ENCODE measurements at regions of chr9 and their contacts with region 1.

Region 1: DNA sequence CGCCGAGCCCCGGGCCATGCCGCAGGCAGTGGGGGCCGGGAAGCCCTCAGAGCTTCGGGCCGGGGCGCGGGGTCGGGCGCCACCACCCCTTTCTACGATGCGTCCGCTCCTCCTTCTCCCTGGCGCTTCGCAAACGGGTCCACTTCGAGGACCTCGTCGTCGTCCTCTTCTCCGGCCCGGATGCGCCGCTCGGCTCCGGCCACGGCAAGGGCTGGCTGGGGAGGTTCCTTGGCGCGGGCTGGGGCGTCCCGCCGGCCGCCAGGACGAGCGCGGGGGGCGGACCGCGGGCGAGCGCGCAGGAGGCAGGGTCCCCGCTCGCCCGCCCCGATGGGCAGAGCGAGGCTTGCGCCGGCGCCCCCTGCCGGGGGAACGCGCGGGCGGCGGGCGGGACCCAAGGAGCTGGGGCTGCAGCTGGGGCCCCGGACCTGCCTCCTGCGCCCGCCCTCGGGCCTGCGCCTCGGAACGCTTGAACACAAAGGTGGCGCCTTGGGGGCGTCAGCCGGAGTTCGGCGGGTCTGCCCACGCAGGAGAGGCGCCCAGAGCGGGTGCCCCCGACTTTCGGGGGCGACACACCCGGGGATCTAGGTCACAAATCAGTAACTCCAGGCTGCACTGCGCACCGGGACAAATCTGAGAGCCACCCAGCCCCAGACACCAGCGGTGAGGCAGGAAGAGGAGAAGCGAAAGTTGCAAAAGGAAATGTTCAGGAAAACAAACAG is at the start of gene ROR2:
- DNase-seq: peak in 4 of 9 donors; percentile 1 to 82 (median 18)
- ATAC-seq: peak; percentile 63
- H3K4me3 ChIP-seq: peak within 1 kb of the TSS; percentile 13
- H3K4me3 Mint-ChIP-seq: peak within 1 kb of the TSS in 9 of 10 donors; percentile 13 to 82 (median 49)
- H3K27ac ChIP-seq: no peak within 1 kb of the TSS
- H3K27ac Mint-ChIP-seq: no peak within 1 kb of the TSS
- H3K4me1 ChIP-seq: peaks cover 0 to 4% of the 10 kb centered on the region in 2 donors
- H3K4me1 Mint-ChIP-seq: peaks cover 0 to 11% (median 7%) of the 10 kb centered on the region in 7 donors
- H3K27me3 ChIP-seq: peaks cover 3 to 14% of the 10 kb centered on the region in 2 donors
- H3K27me3 Mint-ChIP-seq: peaks cover 63 to 78% (median 76%) of the 10 kb centered on the region in 5 donors
- total RNA-seq, gene ROR2: 0.48 to 2.1 TPM in 2 of 5 experiments, not detected in the others

Region 2: GRCh38 chr9:91775011-91775707 is 174.9 kb before region 1 on chr9:
- CTCF ChIA-PET with region 1: no interaction called
- POLR2A ChIA-PET with region 1: no interaction called
- intact Hi-C with region 1: loop called in 1 of 2 experiments (anchors 1 kb)
- DNase-seq: peak in 7 of 9 donors; percentile 16 to 65 (median 33)
- ATAC-seq: peak; percentile 63
- H3K4me3 ChIP-seq: no peak overlapping the region
- H3K4me3 Mint-ChIP-seq: no peak overlapping the region
- H3K27ac ChIP-seq: no peak overlapping the region
- H3K27ac Mint-ChIP-seq: no peak overlapping the region
- H3K4me1 ChIP-seq: peaks cover 0 to 4% of the 10 kb centered on the region in 2 donors
- H3K4me1 Mint-ChIP-seq: peaks cover 0 to 4% (median 0%) of the 10 kb centered on the region in 7 donors
- H3K27me3 ChIP-seq: peaks cover 0 to 4% of the 10 kb centered on the region in 2 donors
- H3K27me3 Mint-ChIP-seq: peaks cover 16 to 32% (median 29%) of the 10 kb centered on the region in 5 donors

Region 3: GRCh38 chr9:91905995-91906469 is 44.1 kb before region 1 on chr9:
- CTCF ChIA-PET with region 1: no interaction called
- POLR2A ChIA-PET with region 1: no interaction called
- intact Hi-C with region 1: loop called in 1 of 2 experiments (anchors 1 kb)
- DNase-seq: peak in 3 of 9 donors; percentile 1 to 65 (median 8)
- ATAC-seq: peak; percentile 78
- H3K4me3 ChIP-seq: peak overlapping the region; percentile 56
- H3K4me3 Mint-ChIP-seq: peak overlapping the region in 1 of 10 donors; percentile 93
- H3K27ac ChIP-seq: no peak overlapping the region
- H3K27ac Mint-ChIP-seq: peak overlapping the region in 1 of 9 donors; percentile 83
- H3K4me1 ChIP-seq: peaks cover 0 to 17% of the 10 kb centered on the region in 2 donors
- H3K4me1 Mint-ChIP-seq: peaks cover 0 to 48% (median 5%) of the 10 kb centered on the region in 7 donors
- H3K27me3 ChIP-seq: no peaks in the 10 kb centered on the region
- H3K27me3 Mint-ChIP-seq: peaks cover 3 to 17% (median 8%) of the 10 kb centered on the region in 5 donors

Region 4: DNA sequence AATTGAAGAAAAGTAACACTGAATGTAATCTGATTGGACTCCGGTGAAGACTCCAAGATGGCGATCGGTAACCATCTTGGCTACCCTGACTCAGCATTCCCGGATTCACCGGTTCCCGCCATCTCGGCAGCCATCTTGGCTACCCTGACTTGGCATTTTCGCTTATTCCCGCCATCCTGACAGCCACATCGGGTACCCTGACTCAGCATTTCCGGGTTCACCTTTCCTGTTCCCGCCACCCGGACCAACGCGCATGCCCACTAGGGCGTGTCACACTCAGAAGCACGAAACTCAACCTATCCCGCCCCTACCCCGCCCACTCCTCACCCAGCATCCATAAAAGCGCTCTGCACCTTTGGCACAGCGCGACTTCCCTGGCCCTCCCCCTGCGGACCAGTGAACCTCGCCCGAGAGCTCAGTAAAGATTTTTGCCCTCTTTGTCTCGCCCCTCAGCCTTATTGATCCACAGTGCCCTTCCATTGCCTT is 147.9 kb after region 1 on chr9:
- CTCF ChIA-PET with region 1: no interaction called
- POLR2A ChIA-PET with region 1: no interaction called
- intact Hi-C with region 1: loop called in 1 of 2 experiments (anchors 10 kb)
- DNase-seq: peak in 8 of 9 donors; percentile 4 to 64 (median 24)
- ATAC-seq: peak; percentile 52
- H3K4me3 ChIP-seq: no peak overlapping the region
- H3K4me3 Mint-ChIP-seq: peak overlapping the region; percentile 19 to 82 (median 50)
- H3K27ac ChIP-seq: no peak overlapping the region
- H3K27ac Mint-ChIP-seq: peak overlapping the region in 6 of 9 donors; percentile 26 to 82 (median 44)
- H3K4me1 ChIP-seq: no peaks in the 10 kb centered on the region
- H3K4me1 Mint-ChIP-seq: peaks cover 17 to 66% (median 64%) of the 10 kb centered on the region in 7 donors
- H3K27me3 ChIP-seq: no peaks in the 10 kb centered on the region
- H3K27me3 Mint-ChIP-seq: no peaks in the 10 kb centered on the region

Region 5: GRCh38 chr9:92790542-92791527 is 840.7 kb after region 1 on chr9:
- CTCF ChIA-PET with region 1: no interaction called
- POLR2A ChIA-PET with region 1: no interaction called
- intact Hi-C with region 1: loop called in 1 of 2 experiments (anchors 10 kb)
- DNase-seq: peak; percentile 53 to 79 (median 70)
- ATAC-seq: peak; percentile 97
- H3K4me3 ChIP-seq: no peak overlapping the region
- H3K4me3 Mint-ChIP-seq: peak overlapping the region in 1 of 10 donors; percentile 4
- H3K27ac ChIP-seq: no peak overlapping the region
- H3K27ac Mint-ChIP-seq: peak overlapping the region in 2 of 9 donors; percentile 37 to 78
- H3K4me1 ChIP-seq: no peaks in the 10 kb centered on the region
- H3K4me1 Mint-ChIP-seq: peaks cover 2 to 11% (median 7%) of the 10 kb centered on the region in 7 donors
- H3K27me3 ChIP-seq: no peaks in the 10 kb centered on the region
- H3K27me3 Mint-ChIP-seq: peaks cover 0 to 13% (median 6%) of the 10 kb centered on the region in 5 donors